ENCODE measurements at regions of chrX and their contacts with region 1.

Region 1: DNA sequence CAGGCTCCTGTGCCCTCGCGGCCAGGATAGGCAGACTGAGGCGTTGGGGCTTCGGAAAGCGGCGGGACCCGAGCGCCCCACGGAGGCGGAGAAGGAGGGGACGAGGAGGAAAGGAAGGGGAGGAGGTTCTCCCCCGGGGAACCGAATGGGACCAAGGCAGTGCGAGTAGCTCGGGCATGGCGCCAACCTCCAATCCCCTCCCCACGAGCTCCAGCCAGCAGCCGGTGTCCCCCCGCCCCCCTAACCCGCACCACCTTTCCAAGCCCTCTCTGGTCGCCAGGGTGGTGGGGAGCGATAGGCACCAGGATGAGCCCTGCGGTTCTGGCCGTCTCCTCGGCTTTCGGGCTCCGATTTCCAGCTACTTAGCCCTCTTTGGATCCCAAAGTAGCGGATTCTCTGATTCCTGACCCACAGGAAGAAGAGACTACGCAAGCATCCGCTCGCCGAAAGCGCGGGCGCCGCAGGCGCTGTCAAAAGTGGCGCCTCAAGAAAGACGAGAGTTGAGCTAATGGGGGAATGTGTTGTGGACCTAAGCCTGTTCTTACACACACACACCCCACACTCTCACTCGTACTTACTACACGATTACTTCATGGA is 15.2 kb upstream of the ZIC3 start:
- DNase-seq: peak in 1 of 2 experiments; percentile 57
- H3K4me3 ChIP-seq: peak overlapping the region; percentile 32 to 62 (median 36)
- H3K27ac ChIP-seq: no peak overlapping the region
- H3K4me1 ChIP-seq: peaks cover 5 to 19% (median 14%) of the 10 kb centered on the region in 4 experiments; a peak in 6 of 7 replicates
- H3K27me3 ChIP-seq: peaks cover 14 to 33% (median 30%) of the 10 kb centered on the region in 4 experiments; a peak in 6 of 7 replicates
- CTCF ChIP-seq: no peak
- EP300 ChIP-seq: no peak
- POLR2A ChIP-seq: no peak
- RAD21 ChIP-seq: peak in 1 of 2 experiments; percentile 22; a peak in 1 of 4 replicates

Region 2: DNA sequence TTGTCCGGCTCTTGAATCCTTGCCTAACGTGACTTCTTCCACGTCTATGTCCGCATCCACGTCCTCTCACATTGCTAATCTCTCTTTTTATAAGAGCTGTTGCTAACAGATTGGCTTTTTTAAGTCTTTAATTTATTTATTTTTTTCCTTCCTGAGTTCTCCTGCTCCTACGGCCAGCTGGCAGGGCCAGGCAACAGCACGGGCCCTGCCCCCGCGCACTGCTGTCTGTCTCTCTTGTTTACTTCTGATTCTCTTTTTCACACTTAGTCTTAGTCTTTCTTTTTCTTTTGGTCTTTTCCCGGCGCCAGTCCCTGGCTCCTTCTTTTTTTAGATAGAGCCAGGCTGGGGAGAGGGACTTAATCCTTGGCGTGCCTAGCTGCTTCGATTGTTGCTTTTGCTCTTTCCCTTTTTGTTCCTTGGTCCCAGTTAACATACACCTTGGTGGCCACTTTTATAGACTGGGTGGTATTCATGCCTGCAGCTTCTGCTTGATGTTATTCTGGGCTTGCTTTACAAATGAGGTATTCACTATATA is 617.1 kb before region 1 on chrX:
- CTCF ChIA-PET with region 1: no interaction called
- POLR2A ChIA-PET with region 1: no interaction called
- DNase-seq: no peak
- H3K4me3 ChIP-seq: no peak overlapping the region
- H3K27ac ChIP-seq: no peak overlapping the region
- H3K4me1 ChIP-seq: no peaks in the 10 kb centered on the region
- H3K27me3 ChIP-seq: no peaks in the 10 kb centered on the region
- CTCF ChIP-seq: no peak
- EP300 ChIP-seq: no peak
- POLR2A ChIP-seq: no peak
- RAD21 ChIP-seq: no peak

Region 3: GRCh38 chrX:137432608-137433007 is 118.2 kb before region 1 on chrX:
- CTCF ChIA-PET with region 1: interaction called, 29 read pairs
- POLR2A ChIA-PET with region 1: interaction called, 6 read pairs
- DNase-seq: peak in 1 of 2 experiments; percentile 51
- H3K4me3 ChIP-seq: no peak overlapping the region
- H3K27ac ChIP-seq: no peak overlapping the region
- H3K4me1 ChIP-seq: peaks cover 0 to 2% (median 0%) of the 10 kb centered on the region in 4 experiments; a peak in 2 of 7 replicates
- H3K27me3 ChIP-seq: peaks cover 0 to 6% (median 1%) of the 10 kb centered on the region in 4 experiments; a peak in 5 of 7 replicates
- CTCF ChIP-seq: peak; percentile 38 to 70 (median 56)
- EP300 ChIP-seq: no peak
- POLR2A ChIP-seq: no peak
- RAD21 ChIP-seq: peak; percentile 86

Region 4: GRCh38 chrX:137565921-137566745 is 15.4 kb after region 1 on chrX and contains the start of gene ZIC3:
- CTCF ChIA-PET with region 1: interaction called, 21 read pairs
- POLR2A ChIA-PET with region 1: interaction called, 105 read pairs
- DNase-seq: peak in 1 of 2 experiments; percentile 84
- H3K4me3 ChIP-seq: peak within 1 kb of the TSS; percentile 69 to 96 (median 82)
- H3K27ac ChIP-seq: no peak within 1 kb of the TSS; the same call in 1 of the 2 replicates
- H3K4me1 ChIP-seq: peaks cover 0 to 8% (median 2%) of the 10 kb centered on the region in 4 experiments; a peak in 4 of 7 replicates
- H3K27me3 ChIP-seq: no peaks in the 10 kb centered on the region
- CTCF ChIP-seq: no peak
- EP300 ChIP-seq: no peak
- POLR2A ChIP-seq: peak in 1 of 2 experiments; percentile 75; a peak in 2 of 3 replicates
- RAD21 ChIP-seq: no peak
- total RNA-seq, gene ZIC3: 73.1 and 79.2 TPM in 2 replicates

Region 5: DNA sequence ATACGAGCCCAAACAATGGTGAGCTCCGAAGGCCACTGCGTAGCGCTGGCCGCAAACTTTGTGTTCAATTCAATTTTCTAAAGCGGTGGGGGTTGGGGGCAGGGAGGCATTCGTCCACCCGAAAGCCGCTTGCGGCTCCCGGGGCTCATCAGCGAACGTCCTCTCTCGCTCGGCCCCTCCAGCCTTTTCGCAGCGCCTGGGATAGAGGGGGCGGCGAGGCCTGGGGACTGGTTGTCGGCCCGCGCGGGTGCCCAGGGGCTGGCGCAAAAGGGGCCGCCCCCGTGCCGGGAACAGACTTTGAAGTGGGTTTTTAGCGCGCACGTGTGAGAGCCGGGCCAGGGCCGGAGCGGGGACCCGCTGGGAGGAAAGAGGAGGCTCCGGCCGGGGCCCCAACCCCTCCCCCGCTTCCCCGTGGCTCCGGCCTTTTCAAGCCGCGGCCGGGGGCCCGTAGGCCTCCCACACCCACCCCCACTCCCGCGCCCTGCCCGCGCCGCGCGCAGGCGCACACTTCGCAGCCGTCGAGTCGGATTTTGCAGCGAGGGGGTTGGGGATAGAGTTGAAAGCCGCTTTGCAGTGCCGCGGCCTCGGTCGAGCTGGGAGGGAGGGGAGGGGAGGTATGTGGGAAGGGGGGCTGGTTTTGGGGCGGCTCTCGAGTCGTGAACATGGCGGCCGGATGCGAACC is 23.5 kb after region 1 on chrX:
- CTCF ChIA-PET with region 1: interaction called, 3 read pairs
- POLR2A ChIA-PET with region 1: interaction called, 105 read pairs
- DNase-seq: peak in 1 of 2 experiments; percentile 75
- H3K4me3 ChIP-seq: peak overlapping the region in 2 of 4 experiments; percentile 93 to 96; a peak in 5 of 8 replicates
- H3K27ac ChIP-seq: peak overlapping the region; percentile 79; the same call in 1 of the 2 replicates
- H3K4me1 ChIP-seq: peaks cover 1 to 22% (median 5%) of the 10 kb centered on the region in 4 experiments; a peak in 6 of 7 replicates
- H3K27me3 ChIP-seq: no peaks in the 10 kb centered on the region
- CTCF ChIP-seq: no peak
- EP300 ChIP-seq: no peak
- POLR2A ChIP-seq: no peak
- RAD21 ChIP-seq: no peak